A673 (cell line): ENCODE measurements at regions of chr10 and their contacts with region 1.

Region 1: GRCh38 chr10:79327090-79327457 is 20.2 kb upstream of the PPIF start:
- DNase-seq: no peak
- H3K4me3 ChIP-seq: no peak overlapping the region
- H3K27ac ChIP-seq: no peak overlapping the region
- H3K4me1 ChIP-seq: no peaks in the 10 kb centered on the region
- H3K27me3 ChIP-seq: no peaks in the 10 kb centered on the region
- CTCF ChIP-seq: no peak

Region 2: GRCh38 chr10:79542626-79543025 is 215.6 kb after region 1 on chr10:
- CTCF ChIA-PET with region 1: no interaction called
- POLR2A ChIA-PET with region 1: no interaction called
- intact Hi-C with region 1: no loop called
- DNase-seq: no peak
- H3K4me3 ChIP-seq: no peak overlapping the region
- H3K27ac ChIP-seq: no peak overlapping the region
- H3K4me1 ChIP-seq: no peaks in the 10 kb centered on the region
- H3K27me3 ChIP-seq: no peaks in the 10 kb centered on the region
- CTCF ChIP-seq: no peak

Region 3: GRCh38 chr10:80078448-80079311 is 751.6 kb after region 1 on chr10 and contains the start of gene TMEM254:
- CTCF ChIA-PET with region 1: no interaction called
- POLR2A ChIA-PET with region 1: interaction called, 12 read pairs
- intact Hi-C with region 1: no loop called
- DNase-seq: peak; percentile 90
- H3K4me3 ChIP-seq: peak within 1 kb of the TSS; percentile 82
- H3K27ac ChIP-seq: peak within 1 kb of the TSS; percentile 88
- H3K4me1 ChIP-seq: no peaks in the 10 kb centered on the region
- H3K27me3 ChIP-seq: no peaks in the 10 kb centered on the region
- CTCF ChIP-seq: no peak
- total RNA-seq, gene TMEM254: 12.2 and 14.8 TPM in 2 replicates